ENCODE measurements at regions of chr17 and their contacts with region 1.

Region 1: DNA sequence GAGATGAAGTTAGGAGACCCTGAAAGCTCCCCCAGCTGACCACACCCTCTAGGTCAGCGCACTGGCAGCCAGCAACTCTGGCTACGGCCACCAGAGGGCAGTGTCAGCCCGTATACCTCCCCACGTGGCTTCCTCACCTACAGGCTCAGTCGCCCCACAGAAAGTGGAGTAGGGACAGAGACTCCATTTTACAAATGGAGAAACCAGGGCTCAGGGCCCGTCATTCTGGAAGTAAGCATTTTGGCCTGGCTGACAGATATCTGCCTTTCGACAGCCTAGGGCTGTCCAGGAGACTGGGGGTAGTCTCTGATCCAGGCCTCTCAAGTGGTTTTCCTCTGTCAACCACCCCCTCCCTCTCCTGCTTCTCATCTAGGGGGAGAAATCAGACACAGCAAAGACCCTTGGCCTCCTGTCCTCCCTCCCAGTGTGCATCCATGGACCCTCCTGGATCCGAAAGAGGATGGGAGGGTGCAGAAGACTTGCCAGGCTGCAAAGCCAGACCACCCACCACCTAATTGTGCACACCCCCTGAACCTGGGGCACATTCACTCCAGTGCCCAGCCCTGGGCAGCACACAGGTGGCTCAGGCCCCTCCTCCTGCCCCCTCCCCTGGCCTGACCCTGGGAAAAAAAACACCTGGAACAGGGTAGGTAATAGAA is 3.8 kb upstream of the HAP1 start:
- DNase-seq: peak; percentile 94
- CTCF ChIP-seq: peak; percentile 96

Region 2: DNA sequence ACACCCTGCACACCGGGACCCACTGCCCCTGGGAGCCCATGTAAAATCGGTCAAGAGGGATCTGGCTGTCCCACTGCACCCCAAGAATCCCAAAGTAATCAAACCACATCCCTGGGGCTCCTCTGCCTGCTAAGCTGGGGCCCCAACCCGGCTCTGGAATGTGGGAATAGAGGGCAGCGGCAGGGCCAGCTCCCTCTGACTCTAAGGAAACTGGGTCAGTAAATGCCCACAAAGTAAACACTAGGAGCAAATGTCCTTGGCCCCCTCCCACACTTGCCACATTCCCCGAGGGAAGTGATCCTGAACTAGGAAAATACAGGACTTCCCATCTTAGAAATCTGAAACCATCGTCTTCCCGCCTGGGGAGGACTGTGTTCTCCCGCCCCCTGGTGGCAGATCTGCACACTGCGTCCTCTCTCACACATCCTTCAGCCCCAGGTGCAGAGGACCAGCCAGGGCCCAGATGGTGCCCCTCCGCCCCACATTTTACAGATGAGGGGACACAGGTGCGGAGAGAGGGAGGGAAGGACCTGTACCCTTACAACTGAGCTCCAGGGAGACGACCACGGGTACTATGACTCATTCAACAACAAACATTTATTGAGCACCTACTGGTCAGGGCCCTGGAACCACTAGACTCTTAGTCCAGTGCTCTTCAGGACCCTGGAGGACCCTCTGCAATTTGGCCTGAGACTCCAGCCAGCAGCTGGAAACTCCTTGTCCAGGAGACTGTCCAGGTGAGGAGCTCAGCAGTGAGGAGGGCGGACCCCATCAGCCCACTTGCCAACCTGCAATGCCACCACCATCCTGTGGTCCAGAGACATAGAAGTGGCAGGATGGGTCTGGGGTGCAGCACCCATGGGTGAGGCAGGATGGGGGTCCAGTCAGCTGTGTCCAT is 63.4 kb after region 1 on chr17:
- in situ Hi-C with region 1: loop called (anchors 5 kb)
- DNase-seq: peak; percentile 87
- CTCF ChIP-seq: peak; percentile 92

Region 3: GRCh38 chr17:41835800-41836549 is 97.8 kb after region 1 on chr17 and contains the start of gene NT5C3B:
- in situ Hi-C with region 1: no loop called
- DNase-seq: peak; percentile 92
- CTCF ChIP-seq: no peak

Region 4: DNA sequence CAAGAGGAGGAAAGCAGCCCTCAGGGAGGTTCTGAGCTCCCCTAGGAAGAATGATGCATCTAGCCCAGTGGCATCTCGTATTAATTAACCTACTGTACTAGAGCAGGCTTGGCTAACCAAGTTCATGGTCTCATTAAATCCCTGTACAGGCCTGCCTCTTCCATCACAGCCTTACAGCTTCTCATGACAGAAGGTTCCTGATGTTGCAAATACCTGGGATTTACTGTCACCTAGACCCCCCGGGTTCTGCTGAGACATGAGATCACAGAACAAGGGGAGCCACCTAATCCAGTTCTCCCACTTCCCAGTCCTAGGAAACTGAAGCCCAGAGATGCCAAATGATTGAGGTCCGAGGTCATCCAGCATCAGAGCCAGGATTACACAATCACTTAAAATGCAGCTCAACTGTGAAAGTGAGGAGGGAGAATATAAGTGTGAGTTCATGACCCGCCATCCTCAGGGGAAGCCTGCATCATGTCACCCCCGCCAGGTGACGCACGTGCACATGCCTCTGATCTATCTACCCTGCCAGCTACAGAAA is 156.7 kb after region 1 on chr17:
- in situ Hi-C with region 1: no loop called
- DNase-seq: no peak
- CTCF ChIP-seq: no peak

Region 5: DNA sequence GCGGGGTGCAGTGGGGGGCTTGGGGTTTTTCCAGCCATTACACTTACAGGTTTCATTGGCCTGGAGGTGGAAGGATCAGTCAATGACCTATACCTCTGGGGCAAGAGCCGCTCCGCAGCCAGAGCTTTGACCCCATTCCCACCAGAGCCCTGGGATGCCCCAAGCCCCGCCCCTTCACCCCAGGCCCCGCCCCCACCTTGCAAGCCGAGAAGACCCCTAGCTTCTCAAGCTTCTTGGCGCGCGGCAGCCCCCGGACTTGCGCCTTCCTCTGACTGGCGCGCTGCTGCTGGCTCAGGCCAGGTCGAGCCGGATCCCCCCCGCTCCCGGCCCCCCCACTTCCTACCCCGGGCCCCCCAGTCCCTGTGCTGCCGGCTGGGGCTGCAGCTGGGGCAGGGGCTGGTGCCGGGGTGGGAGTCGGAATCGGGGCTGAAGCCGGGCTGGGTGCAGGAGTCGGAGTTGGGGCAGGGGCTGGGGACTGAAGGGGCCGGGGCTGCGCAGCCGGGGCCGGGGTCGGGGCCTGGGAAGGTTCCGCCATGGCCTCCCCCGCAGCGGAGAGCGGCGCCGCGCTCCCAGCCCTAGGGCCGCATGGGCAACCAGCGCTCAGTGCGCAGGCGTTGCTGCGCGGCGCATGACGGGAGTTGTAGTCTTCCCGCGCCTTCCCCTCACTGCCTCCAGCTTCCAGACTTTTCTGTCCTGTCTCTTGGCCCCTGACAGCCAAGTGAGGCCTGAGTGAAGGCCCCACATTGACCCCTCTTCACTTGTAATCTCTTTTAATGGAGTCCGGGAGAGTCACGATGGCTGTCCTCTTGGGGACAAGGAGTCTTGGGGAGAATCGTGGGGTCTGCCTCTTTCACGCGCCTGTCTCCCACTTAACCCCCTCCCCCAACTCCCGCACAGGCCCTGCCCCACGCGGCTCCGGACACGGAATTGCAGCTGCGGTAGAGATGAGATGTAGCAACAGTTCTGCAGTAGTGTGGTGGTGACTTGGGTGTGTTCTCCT is 382.9 kb after region 1 on chr17 and contains the start of gene KAT2A:
- in situ Hi-C with region 1: loop called (anchors 25 kb)
- DNase-seq: peak; percentile 97
- CTCF ChIP-seq: no peak